CD8-positive, alpha-beta memory T cell (primary cell): ENCODE measurements at regions of chr4 and their contacts with region 1.

Region 1: DNA sequence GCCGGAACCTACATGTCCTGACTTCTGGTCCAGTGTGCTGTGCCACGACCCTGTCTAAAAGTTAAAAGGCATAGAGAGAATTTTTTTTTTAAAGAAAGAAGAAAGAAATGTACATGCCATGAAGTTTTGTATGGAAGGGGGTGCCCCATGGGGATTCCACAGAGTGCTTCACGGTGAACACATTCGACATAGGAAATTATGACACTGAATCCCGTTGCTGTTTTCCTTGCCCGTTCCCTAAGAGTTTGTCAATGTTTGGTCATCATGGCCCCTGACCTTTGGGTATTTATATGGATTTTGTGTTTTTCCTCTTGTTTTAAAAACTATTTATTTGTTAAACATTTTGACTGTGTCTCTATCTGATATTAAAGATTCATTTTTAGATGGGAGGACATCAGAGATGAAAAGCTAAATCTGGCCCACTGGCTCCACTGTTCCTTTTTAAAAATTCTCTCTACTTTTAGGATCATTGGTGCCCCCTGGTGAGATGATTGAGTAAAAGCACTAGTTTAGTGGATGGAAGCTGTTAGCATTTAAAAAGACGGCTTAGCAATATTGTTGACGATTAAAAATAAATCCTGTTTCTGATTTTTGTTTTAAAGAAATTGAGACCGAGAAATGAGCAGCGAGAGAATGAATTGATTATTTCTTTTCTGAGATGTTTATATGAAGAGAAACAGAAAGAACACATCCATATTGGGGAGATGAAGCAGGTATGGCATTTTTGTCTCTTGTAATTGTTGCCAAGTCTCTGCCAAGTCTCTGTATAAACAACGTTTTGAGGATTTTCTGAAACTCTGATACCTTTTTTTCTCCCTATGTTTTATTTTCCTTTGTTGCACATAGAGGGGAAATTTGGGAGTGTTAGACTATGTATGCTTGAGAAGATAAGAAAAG is 75.0 kb downstream of the PTTG2 start:
- DNase-seq: peak in 3 of 5 donors; percentile 9 to 47 (median 44)
- H3K4me3 ChIP-seq: no peak overlapping the region
- H3K4me3 Mint-ChIP-seq: no peak overlapping the region
- H3K27ac ChIP-seq: no peak overlapping the region
- H3K27ac Mint-ChIP-seq: peak overlapping the region in 2 of 8 donors; percentile 50 to 72
- H3K4me1 ChIP-seq: no peaks in the 10 kb centered on the region
- H3K4me1 Mint-ChIP-seq: no peaks in the 10 kb centered on the region
- H3K27me3 ChIP-seq: no peaks in the 10 kb centered on the region
- H3K27me3 Mint-ChIP-seq: no peaks in the 10 kb centered on the region

Region 2: DNA sequence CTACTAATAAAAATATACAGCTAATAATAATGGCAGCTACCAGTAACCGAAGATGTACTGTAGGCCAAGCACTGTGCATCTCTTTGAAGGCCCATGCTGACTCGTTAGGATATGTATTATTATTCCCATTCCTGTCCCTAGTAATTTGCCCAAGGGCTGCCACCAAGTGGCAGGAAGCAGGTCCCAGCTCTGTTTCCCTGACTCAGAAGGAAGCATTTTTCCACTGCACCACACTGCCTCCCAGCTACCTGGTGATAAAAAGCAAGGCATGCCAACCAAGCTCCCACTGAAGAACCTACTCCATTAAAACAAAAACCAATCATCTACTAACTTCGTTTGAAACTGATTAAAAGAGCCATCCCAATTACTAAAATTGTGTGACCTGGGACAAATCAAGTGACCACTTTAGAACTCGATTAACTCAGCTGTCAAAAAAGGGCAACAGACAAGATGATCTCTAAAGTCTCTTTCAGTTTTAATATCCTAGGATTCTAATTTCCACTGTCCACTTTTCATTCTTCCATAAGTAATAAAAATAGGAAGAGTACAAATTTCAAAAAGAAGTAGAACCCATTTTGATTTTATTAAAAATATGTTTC is 233.1 kb before region 1 on chr4:
- CTCF ChIA-PET with region 1: interaction called, 23 read pairs
- POLR2A ChIA-PET with region 1: no interaction called
- DNase-seq: no peak
- H3K4me3 ChIP-seq: no peak overlapping the region
- H3K4me3 Mint-ChIP-seq: no peak overlapping the region
- H3K27ac ChIP-seq: no peak overlapping the region
- H3K27ac Mint-ChIP-seq: no peak overlapping the region
- H3K4me1 ChIP-seq: no peaks in the 10 kb centered on the region
- H3K4me1 Mint-ChIP-seq: no peaks in the 10 kb centered on the region
- H3K27me3 ChIP-seq: no peaks in the 10 kb centered on the region
- H3K27me3 Mint-ChIP-seq: peaks cover 2 to 7% of the 10 kb centered on the region in 2 donors